Posterior vena cava (tissue), 2 donors: ENCODE measurements at regions of chr2 and their contacts with region 1.

Region 1: GRCh38 chr2:236507393-236508085 is 62.1 kb upstream of the ACKR3 start:
- DNase-seq: no peak

Region 2: GRCh38 chr2:236550701-236551465 is 43.3 kb after region 1 on chr2:
- intact Hi-C with region 1: loop called in 1 of 2 experiments (anchors 5 kb)
- DNase-seq: peak; percentile 58

Region 3: DNA sequence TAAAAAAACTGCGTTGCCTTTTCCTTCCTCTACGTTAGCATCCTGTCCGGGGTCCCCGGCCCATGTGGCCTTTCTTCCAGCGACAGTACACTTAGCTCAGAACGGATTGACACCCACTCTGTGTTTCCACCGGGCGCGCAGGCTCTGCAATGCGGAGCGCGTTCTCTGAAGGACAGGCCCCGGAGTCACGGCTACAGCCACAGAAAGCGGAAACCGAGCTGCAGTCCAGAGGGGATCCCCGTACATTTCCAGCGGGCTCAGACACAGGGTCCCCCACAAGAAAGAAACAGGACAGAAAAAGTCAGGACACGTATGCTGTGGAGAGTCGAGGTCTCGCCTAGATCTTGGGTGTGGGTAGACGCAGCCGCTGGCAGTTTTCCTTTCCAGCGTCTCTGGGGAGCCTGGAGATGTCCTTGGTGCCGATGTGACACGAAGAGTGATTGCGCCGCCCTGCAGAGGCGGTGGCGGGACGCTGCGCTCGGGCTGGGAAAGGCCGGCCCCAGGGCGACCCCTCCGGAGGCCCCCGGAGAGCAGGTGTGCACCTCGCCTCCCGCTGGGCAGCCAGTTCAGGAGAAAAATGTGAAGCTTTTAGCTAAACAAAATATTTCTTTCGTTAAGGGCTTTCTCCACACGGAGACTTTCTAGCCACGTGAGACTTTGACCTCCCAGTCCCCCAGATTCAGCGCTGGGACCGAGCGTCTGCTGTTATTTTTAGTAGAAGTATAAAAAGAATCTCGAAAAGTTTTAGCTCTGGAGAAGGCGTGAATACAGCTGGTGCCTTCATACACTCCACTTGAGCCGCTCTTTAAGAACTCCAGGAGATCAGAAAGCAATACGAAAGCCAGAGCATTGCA is 60.8 kb after region 1 on chr2:
- intact Hi-C with region 1: no loop called
- DNase-seq: peak; percentile 89

Region 4: GRCh38 chr2:236675051-236675450 is 167.5 kb after region 1 on chr2:
- intact Hi-C with region 1: no loop called
- DNase-seq: no peak

Region 5: DNA sequence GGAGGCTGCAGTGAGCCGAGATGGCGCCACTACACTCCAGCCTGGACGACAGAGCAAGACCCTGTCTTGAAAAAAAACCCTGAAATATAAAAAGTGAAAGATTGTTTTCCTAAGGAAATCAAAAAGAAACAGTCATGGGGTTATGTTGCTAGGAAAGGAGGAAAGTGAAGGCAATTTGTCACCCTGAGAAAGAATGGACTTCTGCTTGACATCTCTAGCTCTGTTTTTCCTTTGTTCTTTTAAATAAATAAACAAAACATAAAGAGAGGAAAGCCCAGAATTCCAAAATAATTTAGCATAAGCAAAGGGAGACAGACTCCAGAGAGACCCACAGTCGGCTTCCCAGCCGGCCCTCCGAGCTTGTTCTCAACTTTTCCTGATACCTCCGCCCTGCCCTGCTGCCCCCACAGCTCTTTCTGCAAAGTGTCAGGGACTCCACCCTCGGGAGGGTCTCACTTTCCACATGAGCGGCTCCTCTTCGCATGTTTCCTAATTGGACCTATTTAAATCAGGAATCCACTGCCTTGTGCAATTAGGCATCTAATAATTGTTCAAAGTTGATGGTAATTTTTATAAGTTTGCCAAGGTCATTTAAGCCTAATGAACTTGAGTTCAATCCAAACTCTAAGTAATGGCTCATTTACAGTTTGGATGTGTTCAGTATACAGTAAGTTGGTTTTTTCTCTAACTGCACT is 528.4 kb after region 1 on chr2:
- intact Hi-C with region 1: loop called in 1 of 2 experiments (anchors 10 kb)
- DNase-seq: no peak